ENCODE measurements at regions of chr2 and their contacts with region 1.

Region 1: DNA sequence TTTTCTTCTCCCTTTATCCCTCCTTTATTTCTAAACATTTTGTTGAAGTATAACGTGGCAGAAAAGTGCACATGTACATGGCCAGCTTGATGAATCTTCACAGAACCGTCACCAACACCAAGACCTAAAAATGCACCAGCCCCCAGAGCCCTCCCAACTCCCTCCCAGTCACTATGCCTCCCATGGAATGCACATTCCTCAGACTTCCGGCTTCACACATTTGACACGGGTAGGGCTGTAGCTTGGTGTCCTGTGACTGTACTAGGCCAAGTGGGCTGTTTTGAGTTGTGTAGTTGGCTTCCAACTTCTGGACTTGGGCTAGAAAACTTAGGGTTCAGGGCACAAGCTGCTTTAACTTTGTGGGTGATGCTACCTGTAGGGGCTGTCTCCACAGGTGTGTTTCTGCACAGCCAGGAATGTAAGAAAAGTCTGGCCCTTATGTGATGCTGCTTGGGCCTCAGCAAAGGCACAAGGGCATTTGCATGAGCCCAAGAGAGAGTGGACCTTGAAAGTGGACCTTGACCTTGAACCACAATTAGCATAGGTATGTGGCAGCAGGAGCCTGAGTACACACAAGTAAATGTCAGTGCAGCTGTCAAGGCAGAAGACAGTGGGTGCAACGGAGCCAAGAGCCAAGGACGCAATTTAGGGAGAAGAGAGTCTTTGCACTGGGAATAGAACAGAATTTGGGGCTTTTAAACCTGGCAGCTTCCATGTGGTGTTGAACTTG is 78.4 kb downstream of the SEPTIN10 start:
- DNase-seq: no peak
- ATAC-seq: no peak
- H3K4me3 Mint-ChIP-seq: no peak overlapping the region
- H3K27ac Mint-ChIP-seq: no peak overlapping the region
- H3K4me1 Mint-ChIP-seq: no peaks in the 10 kb centered on the region
- H3K27me3 Mint-ChIP-seq: peaks cover 1% of the 10 kb centered on the region
- CTCF ChIP-seq: no peak

Region 2: GRCh38 chr2:108877506-108877905 is 657.9 kb before region 1 on chr2:
- CTCF ChIA-PET with region 1: no interaction called
- POLR2A ChIA-PET with region 1: no interaction called
- intact Hi-C with region 1: no loop called
- DNase-seq: no peak
- ATAC-seq: no peak
- H3K4me3 Mint-ChIP-seq: no peak overlapping the region
- H3K27ac Mint-ChIP-seq: no peak overlapping the region
- H3K4me1 Mint-ChIP-seq: no peaks in the 10 kb centered on the region
- H3K27me3 Mint-ChIP-seq: no peaks in the 10 kb centered on the region
- CTCF ChIP-seq: no peak

Region 3: GRCh38 chr2:109173311-109174171 is 361.8 kb before region 1 on chr2:
- CTCF ChIA-PET with region 1: no interaction called
- POLR2A ChIA-PET with region 1: no interaction called
- intact Hi-C with region 1: no loop called
- DNase-seq: no peak
- ATAC-seq: no peak
- H3K4me3 Mint-ChIP-seq: no peak overlapping the region
- H3K27ac Mint-ChIP-seq: no peak overlapping the region
- H3K4me1 Mint-ChIP-seq: peaks cover 39% of the 10 kb centered on the region
- H3K27me3 Mint-ChIP-seq: no peaks in the 10 kb centered on the region
- CTCF ChIP-seq: no peak

Region 4: DNA sequence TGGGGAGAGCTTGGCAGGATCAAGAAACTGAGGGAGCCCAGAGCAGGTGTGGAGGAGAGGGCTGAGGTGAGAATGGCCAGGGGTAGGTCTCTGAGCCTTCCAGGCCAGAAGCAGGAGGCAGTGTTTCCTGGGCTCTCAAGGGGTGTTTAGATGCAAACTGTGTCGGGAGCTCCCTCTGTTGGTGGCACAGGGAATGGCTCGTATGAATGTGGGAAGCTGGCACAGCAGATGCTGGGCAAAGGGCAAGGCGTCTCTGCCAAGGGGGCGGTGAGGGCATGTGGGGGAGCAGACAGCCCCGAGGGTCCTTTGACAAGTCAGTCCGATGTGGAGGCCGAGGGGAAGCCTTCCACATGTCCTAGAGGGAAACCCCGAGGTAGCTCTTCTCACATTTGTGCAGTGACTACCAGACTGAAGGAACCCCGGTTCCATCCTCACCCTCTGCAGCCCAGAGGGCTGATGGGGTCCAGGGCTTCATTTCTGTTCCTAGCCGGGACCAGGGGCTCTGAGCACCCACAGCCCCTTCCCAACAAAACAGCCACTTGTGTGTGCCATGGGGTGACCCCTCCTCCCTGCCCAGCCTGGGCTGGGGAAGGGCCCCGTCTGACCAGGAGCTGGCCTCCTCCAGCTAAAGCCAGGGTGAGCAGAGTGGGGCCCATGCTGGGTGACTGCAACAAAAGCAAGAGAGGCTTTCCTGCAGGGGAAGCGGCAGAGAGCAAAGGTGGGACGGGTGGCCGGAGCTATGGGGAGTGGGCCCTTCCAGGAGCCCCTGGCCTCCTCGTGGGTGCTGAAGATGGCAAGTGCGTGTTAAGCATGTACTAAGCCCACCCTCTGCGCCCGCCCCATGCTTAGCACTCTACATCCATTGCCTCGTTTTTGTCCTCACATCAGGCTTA is 25.0 kb before region 1 on chr2:
- CTCF ChIA-PET with region 1: interaction called, 12 read pairs
- POLR2A ChIA-PET with region 1: no interaction called
- intact Hi-C with region 1: no loop called
- DNase-seq: peak; percentile 90
- ATAC-seq: peak; percentile 88
- H3K4me3 Mint-ChIP-seq: no peak overlapping the region
- H3K27ac Mint-ChIP-seq: no peak overlapping the region
- H3K4me1 Mint-ChIP-seq: peaks cover 2% of the 10 kb centered on the region
- H3K27me3 Mint-ChIP-seq: no peaks in the 10 kb centered on the region
- CTCF ChIP-seq: peak; percentile 87

Region 5: DNA sequence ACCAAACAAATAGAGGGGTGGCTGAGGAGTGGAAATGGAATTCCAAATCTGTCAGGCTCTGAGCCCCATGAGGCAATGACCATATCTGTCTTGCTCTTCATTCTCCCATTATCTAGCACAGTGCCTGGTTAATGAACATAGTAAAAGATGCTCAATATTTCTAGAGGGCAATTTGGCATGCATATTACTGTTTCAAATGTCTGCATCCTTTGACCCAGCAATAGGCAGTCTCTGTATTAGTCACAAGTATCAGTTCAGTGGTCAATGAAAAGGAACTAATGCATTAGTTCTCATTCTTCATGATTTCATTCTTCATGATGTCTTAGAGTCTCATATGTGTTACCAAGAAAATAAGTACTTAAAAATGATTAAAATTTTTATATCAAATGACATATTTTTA is 608.6 kb after region 1 on chr2:
- CTCF ChIA-PET with region 1: no interaction called
- POLR2A ChIA-PET with region 1: no interaction called
- intact Hi-C with region 1: no loop called
- DNase-seq: no peak
- ATAC-seq: no peak
- H3K4me3 Mint-ChIP-seq: no peak overlapping the region
- H3K27ac Mint-ChIP-seq: no peak overlapping the region
- H3K4me1 Mint-ChIP-seq: peaks cover 7% of the 10 kb centered on the region
- H3K27me3 Mint-ChIP-seq: no peaks in the 10 kb centered on the region
- CTCF ChIP-seq: no peak